HAP-1 (cell line): ENCODE measurements at regions of chr3 and their contacts with region 1.

Region 1: DNA sequence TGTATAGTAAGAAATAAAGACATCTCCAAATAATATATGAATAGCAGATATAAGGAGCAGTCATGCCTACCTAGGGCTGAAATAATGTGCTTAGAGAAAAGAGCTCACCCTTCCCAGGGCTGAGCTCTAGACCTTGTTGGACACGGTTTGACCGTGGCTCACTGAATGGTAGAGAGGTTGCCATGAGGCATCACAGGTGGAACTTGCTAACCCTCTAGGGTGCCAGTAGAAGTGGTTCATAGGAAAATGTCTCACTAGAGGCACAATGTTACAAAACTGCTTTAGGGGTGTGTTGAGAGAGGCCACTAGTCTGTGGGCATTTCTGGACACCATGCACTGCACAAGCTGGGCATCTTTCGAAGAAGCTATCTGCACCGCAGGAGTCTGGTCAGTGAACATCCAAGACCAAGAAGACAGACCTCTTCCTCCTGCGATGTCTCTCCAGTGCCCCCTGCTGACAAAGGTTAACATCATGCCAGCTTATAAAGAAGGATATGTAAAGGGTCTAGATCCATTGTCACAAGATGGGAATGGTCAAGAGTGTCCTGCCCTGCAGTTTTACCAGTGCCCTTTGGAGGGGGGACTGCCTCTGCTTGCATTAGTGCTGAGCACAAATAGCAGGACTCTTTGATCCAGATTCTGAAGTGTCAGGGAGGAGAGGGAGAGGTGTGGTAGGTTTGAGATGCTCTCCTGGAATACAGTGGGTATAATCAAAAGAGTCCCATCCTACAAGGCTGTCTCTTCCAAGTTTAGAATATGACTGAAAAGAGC is 266.8 kb downstream of the ZNF385D start:
- DNase-seq: peak; percentile 60 to 82
- H3K4me3 ChIP-seq: no peak overlapping the region
- H3K4me1 ChIP-seq: no peaks in the 10 kb centered on the region
- H3K27me3 ChIP-seq: peaks cover 8% of the 10 kb centered on the region; the same call in 1 of the 2 replicates

Region 2: DNA sequence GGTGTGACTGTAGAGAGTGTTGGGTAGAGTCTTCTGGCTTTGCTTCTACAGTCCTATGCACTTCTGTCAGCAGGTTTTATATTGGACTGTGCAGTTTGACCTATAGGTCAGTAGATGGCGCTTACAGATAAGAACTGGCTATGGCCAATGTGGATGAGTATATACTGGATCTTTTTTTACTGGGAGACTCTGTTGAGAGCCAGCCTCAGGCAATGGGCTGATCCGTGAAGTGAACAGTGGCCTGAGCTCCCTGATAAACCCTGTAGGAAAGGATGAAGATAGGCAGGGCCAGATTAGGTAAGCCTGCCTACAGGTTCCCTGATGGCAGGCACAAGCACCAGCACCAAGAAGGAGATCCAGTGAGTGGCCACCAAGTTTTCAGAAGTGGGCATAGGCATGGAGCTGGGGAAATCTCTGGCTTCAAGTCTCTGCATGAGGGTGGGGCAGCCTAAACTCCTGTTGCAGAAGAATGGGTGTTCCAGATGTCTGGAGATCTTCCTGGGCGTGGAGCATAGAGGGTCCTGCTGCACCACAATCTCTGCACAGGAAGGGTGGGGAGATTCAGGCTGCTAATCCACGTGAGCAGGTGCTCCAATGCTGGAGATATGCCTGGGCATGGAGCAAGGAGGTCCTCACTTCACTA is 972.3 kb before region 1 on chr3:
- in situ Hi-C with region 1: loop called (anchors 25 kb)
- DNase-seq: peak; percentile 31 to 52
- H3K4me3 ChIP-seq: no peak overlapping the region
- H3K4me1 ChIP-seq: no peaks in the 10 kb centered on the region
- H3K27me3 ChIP-seq: no peaks in the 10 kb centered on the region

Region 3: DNA sequence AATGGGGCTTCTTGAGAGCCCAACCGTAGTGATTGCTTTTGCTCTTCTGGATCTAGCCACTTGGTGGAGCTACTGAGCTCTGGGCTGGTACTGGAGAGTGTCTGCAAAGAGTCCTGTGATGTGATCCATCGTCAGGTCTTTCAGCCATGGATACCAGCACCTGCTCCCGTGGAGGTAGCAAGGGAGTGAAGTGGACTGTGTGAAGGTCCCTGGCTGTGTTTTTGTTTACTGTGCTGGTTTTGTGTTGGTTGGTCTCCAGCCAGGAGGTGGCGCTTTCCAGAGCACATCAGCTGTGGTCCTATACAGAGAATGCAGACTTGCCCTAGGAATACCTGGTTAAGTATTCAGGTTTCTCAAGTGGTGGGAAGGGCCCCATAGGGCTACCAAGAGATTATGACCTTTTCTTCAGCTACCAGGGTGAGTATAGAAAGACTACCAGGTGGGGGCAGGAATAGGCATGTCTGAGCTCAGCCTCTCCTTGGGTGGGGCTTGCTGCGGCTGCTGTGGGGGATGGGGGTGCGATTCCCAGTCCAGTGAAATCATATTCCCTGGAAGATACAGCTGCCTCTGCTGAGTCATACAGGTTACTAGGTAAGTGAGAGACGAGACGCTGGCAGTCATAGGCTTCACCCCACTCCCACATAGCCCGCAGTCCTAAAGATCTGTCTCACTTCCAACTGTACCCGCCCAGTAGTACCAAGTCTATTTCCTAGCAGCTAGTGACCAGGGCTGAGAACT is 467.0 kb before region 1 on chr3:
- in situ Hi-C with region 1: loop called (anchors 25 kb)
- DNase-seq: peak in 1 of 2 experiments; percentile 52
- H3K4me3 ChIP-seq: no peak overlapping the region
- H3K4me1 ChIP-seq: no peaks in the 10 kb centered on the region
- H3K27me3 ChIP-seq: no peaks in the 10 kb centered on the region

Region 4: GRCh38 chr3:21894459-21895340 is 410.5 kb after region 1 on chr3:
- in situ Hi-C with region 1: loop called (anchors 25 kb)
- DNase-seq: peak; percentile 6 to 29
- H3K4me3 ChIP-seq: no peak overlapping the region
- H3K4me1 ChIP-seq: no peaks in the 10 kb centered on the region
- H3K27me3 ChIP-seq: no peaks in the 10 kb centered on the region